HEK293 (cell line): ENCODE measurements at regions of chr6 and their contacts with region 1.

Region 1: GRCh38 chr6:42217519-42218367 is at the start of gene MRPS10:
- H3K4me3 ChIP-seq: peak within 1 kb of the TSS; percentile 60
- H3K27ac ChIP-seq: peak within 1 kb of the TSS; percentile 79
- H3K4me1 ChIP-seq: peaks cover 3% of the 10 kb centered on the region; the same call in 1 of the 2 replicates
- CTCF ChIP-seq: no peak

Region 2: GRCh38 chr6:42050266-42051032 is 167.3 kb before region 1 on chr6 and contains the start of gene TAF8:
- CTCF ChIA-PET with region 1: interaction called, 16 read pairs
- POLR2A ChIA-PET with region 1: interaction called, 7 read pairs
- H3K4me3 ChIP-seq: peak within 1 kb of the TSS; percentile 98
- H3K27ac ChIP-seq: peak within 1 kb of the TSS; percentile 86
- H3K4me1 ChIP-seq: peaks cover 14% of the 10 kb centered on the region
- CTCF ChIP-seq: peak; percentile 50; the same call in 1 of the 2 replicates

Region 3: DNA sequence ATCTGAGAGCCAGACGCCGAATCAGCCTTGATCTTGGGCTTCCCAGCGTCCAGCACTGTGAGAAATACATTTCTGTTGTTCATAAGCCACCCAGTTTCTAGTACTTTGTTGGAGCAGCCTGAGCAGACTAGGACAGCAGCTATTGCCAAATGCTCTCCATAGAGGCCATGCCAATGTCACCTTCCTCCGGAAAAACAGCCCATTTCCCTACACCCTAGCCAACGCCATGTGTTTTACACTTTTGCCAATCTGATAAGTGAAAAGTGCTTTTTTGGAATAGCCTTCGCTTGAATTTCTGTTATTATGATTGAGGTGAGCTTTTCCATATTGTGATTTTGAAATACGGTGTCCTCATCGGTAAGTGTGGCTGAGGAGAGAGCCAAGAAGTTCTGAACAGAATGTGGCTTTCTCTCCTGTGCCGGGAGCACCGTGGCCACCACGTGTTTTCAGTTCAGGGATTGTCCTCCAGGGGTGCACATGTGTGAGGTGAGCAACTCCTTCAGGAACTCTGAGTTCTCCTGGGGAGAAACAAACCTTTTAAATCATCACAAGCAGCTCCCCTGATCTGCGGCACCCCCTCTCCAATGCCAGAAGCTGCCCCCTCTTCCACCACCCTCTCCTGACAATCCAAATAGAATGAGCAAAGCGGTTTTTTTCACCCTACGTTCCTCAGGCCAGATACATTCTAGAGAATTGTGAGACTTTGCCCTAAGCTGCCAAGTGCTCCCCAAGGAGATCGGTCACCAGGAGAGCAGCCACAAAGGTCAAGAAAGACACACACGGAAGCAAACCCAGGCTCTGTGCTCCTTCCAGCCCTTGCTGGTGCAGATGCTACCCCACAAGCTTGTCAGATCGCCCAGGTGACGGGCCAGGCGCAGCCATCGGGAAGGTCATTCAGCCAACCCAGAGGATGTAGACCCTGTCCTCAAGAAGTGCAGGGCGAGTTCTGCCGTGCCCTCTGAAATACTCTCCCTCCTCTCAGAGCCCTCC is 131.4 kb before region 1 on chr6:
- CTCF ChIA-PET with region 1: interaction called, 17 read pairs
- POLR2A ChIA-PET with region 1: no interaction called
- H3K4me3 ChIP-seq: no peak overlapping the region
- H3K27ac ChIP-seq: no peak overlapping the region
- H3K4me1 ChIP-seq: no peaks in the 10 kb centered on the region
- CTCF ChIP-seq: 0 out of 2 replicates have a peak, but pooled peaks have one; percentile 12

Region 4: DNA sequence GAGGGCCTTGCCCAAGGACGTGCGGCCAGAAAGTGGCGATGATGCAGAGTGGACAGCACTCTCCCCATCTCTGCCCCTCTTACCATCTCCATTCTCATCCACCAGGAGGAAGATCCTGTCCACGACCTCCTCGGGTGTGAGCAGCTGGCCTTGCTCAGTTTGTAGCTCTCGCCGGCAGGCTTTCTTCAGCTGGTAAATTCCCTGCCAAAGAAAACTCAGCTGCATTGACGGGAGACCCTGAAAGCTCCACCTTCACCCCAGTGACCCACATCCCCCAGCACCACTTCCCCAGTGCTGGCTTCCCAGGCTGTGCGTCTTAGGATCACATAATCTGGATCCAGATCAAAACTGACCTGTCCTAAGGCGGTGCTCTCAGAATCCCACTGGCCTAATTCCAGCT is 32.1 kb before region 1 on chr6:
- CTCF ChIA-PET with region 1: interaction called, 13 read pairs
- POLR2A ChIA-PET with region 1: no interaction called
- H3K4me3 ChIP-seq: no peak overlapping the region
- H3K27ac ChIP-seq: no peak overlapping the region
- H3K4me1 ChIP-seq: 0 out of 2 replicates have a peak, but pooled peaks cover 1% of the 10 kb centered on the region
- CTCF ChIP-seq: no peak

Region 5: GRCh38 chr6:42200035-42200434 is 17.7 kb before region 1 on chr6:
- CTCF ChIA-PET with region 1: interaction called, 40 read pairs
- POLR2A ChIA-PET with region 1: interaction called, 6 read pairs
- H3K4me3 ChIP-seq: no peak overlapping the region
- H3K27ac ChIP-seq: no peak overlapping the region
- H3K4me1 ChIP-seq: no peaks in the 10 kb centered on the region
- CTCF ChIP-seq: no peak